SK-N-SH (cell line): ENCODE measurements at regions of chr1 and their contacts with region 1.

Region 1: DNA sequence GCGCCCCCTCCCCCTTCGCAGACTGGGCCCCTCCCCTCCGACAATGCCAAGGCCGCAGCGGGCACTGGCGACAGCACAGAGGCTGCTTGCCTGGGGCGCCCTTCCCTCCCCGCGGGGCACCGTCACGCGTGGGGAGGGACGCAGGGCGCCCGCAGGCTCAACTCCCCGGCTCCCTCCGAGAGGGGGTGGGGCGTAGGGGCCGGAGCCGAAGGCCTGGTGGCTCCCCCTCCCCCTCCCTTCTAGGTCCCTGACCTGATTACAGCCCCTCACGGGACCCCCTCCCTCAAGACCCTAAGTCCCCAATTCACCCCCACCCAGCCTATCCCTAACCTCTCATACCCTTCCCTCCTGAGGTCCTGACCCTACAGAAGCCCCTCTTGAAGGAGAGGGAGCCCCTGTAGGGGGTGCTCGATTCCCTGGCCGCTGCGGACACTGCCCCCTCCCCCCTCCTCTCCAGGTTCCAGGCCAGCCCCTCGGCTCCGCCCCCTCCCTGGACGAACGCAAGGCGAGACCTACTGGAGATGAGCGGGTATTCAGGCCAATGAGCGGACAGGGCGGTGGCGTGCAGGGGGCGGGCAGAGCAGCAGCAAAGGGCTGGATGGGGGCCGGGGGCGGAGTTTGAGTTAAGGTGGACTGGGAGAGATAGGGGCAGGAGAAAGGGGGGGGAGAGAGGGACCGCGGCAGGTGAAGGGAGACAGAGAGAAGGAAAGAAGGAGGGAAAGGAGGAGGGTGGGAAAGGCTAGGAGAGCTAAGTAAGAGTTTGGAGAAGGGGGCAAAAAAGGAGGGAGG is 733 bp upstream of the ZBTB7B start:
- DNase-seq: peak; percentile 96
- H3K4me3 ChIP-seq: peak overlapping the region; percentile 57 to 71
- H3K27ac ChIP-seq: peak overlapping the region; percentile 92 to 96
- H3K4me1 ChIP-seq: peaks cover 19 to 33% of the 10 kb centered on the region in 2 experiments
- H3K27me3 ChIP-seq: no peaks in the 10 kb centered on the region
- CTCF ChIP-seq: peak; percentile 69
- EP300 ChIP-seq: no peak
- RAD21 ChIP-seq: no peak

Region 2: DNA sequence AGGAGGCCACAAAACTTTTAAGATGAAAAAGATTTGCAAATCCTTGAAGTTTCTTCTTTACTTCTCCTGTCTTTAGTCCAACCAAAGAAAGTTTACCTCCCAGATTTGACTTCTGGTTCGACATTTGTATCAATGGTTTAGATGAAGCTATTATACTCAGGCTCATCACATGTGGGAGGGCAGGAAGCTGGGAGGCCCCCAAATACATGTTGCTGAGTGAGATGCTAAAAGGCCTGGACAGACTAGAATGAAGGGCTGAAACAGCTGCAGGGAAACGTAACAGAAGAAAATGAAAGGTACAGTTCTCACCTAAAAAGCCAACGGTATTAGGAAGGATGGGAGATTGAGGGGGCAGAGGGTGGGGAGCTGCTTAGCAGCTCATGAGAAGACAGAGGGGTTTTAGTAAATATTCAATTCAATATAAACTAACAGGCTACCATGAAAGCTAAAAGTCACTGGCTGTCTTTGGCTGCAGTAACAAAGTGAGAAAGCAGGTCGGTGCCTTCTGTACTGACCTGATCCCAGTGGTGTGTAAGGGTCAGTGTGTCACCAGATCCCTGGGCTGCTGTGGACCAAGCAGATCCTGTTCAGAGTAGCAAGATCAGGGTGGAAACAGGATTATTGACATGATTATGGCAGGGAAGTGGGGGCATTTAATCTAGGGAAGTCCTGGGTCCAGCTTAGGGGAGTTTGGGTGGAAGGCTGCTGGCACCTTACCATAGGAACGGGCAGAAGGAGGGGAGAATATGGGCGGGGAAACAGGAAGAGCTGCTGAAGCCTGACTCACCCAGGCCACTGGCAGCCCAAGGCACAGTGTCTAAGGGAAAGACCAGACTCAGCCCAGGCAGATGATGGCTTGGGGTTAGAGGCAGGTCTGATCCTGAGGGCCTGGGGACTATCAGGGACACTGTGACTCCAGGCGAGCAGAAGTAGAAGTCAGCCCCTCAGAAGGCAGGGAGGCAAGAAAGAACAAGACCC is 192.1 kb before region 1 on chr1:
- CTCF ChIA-PET with region 1: no interaction called
- POLR2A ChIA-PET with region 1: no interaction called
- DNase-seq: no peak
- H3K4me3 ChIP-seq: no peak overlapping the region
- H3K27ac ChIP-seq: no peak overlapping the region
- H3K4me1 ChIP-seq: peaks cover 0 to 46% of the 10 kb centered on the region in 2 experiments; a peak in 2 of 4 replicates
- H3K27me3 ChIP-seq: peaks cover 24% of the 10 kb centered on the region
- CTCF ChIP-seq: no peak
- EP300 ChIP-seq: no peak
- RAD21 ChIP-seq: no peak

Region 3: DNA sequence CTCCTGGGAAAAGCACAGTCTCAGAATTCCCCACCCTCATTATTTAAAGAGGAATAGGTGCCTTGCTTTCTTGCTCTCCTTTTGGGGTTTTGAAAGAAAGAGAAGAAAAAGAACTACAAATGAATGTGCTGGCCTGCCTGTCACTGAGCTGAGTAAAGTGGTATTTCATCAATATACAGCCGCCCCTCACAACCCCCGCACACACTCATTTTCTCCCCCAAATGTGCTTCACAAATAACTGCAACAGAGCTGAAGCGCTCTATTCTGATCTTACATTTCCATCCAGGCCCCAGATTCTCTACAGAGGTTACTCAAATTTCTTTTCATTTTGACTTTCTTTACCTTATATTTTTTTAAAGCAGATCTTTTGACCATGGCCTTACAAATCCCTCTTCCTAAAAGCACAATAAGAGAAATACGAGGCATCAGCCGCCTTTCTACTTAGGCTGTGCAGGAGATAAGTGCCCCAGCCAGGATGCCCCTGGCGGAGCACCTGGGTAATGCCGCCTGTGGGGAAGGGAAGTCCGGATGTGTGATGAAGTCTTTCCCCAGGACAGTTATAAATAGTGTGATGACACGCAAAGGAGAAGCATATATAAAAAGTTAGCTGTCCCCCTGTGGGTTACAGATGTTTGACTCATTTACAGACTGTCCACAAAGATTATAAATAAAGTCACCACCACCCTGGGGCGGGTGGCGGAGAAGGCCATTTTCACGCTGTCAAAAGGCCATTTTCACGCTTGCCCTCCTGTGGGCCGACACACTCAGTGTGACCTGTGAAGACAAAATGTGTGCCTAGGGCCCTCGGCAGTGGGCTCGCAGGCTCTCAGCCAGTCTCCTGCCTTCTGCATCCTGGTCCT is 138.3 kb before region 1 on chr1:
- CTCF ChIA-PET with region 1: no interaction called
- POLR2A ChIA-PET with region 1: no interaction called
- DNase-seq: peak; percentile 53
- H3K4me3 ChIP-seq: no peak overlapping the region; a peak in 1 of 4 replicates
- H3K27ac ChIP-seq: no peak overlapping the region
- H3K4me1 ChIP-seq: peaks cover 5 to 31% of the 10 kb centered on the region in 2 experiments; a peak in 2 of 4 replicates
- H3K27me3 ChIP-seq: peaks cover 8% of the 10 kb centered on the region; the same call in 1 of the 2 replicates
- CTCF ChIP-seq: peak; percentile 53
- EP300 ChIP-seq: no peak
- RAD21 ChIP-seq: 0 out of 2 replicates have a peak, but pooled peaks have one; percentile 5

Region 4: GRCh38 chr1:154943649-154944400 is 58.0 kb before region 1 on chr1:
- CTCF ChIA-PET with region 1: interaction called, 20 read pairs
- POLR2A ChIA-PET with region 1: no interaction called
- DNase-seq: peak; percentile 83
- H3K4me3 ChIP-seq: no peak overlapping the region
- H3K27ac ChIP-seq: no peak overlapping the region
- H3K4me1 ChIP-seq: peaks cover 4 to 25% of the 10 kb centered on the region in 2 experiments; a peak in 2 of 4 replicates
- H3K27me3 ChIP-seq: no peaks in the 10 kb centered on the region
- CTCF ChIP-seq: peak; percentile 82
- EP300 ChIP-seq: no peak
- RAD21 ChIP-seq: peak; percentile 80

Region 5: DNA sequence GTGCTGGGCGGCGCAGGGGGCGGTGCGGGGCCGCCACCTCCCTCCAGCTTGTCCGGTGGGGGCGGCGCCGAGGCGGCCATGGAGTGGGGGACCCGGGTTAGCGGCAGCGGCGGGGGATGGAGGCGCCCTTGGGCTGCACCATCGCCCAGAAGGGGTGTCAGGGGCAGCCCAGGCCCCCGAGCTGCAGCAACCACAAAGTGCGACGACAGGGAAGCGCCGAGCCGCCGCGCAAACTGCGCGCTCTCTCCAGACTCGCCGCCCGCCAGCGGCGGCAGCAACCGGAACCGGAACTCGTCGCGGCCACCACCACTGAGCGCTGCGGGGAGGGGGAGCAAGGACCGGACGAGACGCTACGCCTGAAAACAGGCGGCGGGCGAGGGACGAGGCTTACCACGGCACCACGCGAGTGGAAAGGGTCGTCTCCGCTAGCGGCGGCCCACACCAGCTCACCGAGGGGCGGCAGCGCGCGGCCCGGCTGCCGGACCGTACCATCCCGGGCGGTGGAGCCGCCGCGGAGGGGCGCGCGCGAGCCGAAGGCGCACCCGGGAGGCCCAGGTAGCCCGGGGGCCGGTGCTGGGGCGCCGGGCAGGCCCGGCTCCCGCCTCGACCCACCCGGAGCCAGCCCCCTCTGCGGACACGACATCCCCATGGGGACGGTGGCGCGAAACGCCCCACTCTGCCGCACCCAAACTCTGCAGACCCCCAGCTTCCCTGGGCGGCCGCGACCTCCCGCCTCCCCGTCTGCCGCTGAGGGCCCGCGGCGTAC is 40.2 kb before region 1 on chr1 and contains the start of gene PYGO2:
- CTCF ChIA-PET with region 1: interaction called, 640 read pairs
- POLR2A ChIA-PET with region 1: interaction called, 18 read pairs
- DNase-seq: peak; percentile 93
- H3K4me3 ChIP-seq: peak within 1 kb of the TSS; percentile 72 to 73
- H3K27ac ChIP-seq: peak within 1 kb of the TSS; percentile 83 to 98
- H3K4me1 ChIP-seq: peaks cover 4 to 36% of the 10 kb centered on the region in 2 experiments; a peak in 3 of 4 replicates
- H3K27me3 ChIP-seq: no peaks in the 10 kb centered on the region
- CTCF ChIP-seq: peak; percentile 69
- EP300 ChIP-seq: 0 out of 4 replicates have a peak, but pooled peaks of 1 of the 2 experiments have one; percentile 26
- RAD21 ChIP-seq: peak; percentile 46
- polyA plus RNA-seq, gene PYGO2: 23.3 and 28.2 TPM in 2 replicates

Region 6: GRCh38 chr1:154974063-154974807 is 27.6 kb before region 1 on chr1 and contains the start of gene CKS1B:
- CTCF ChIA-PET with region 1: interaction called, 640 read pairs
- POLR2A ChIA-PET with region 1: interaction called, 15 read pairs
- DNase-seq: peak; percentile 81
- H3K4me3 ChIP-seq: peak within 1 kb of the TSS; percentile 67 to 79
- H3K27ac ChIP-seq: peak within 1 kb of the TSS; percentile 99 to 100
- H3K4me1 ChIP-seq: peaks cover 27 to 53% of the 10 kb centered on the region in 2 experiments
- H3K27me3 ChIP-seq: no peaks in the 10 kb centered on the region
- CTCF ChIP-seq: no peak
- EP300 ChIP-seq: no peak
- RAD21 ChIP-seq: no peak
- polyA plus RNA-seq, gene CKS1B: 256 and 308 TPM in 2 replicates

Region 7: DNA sequence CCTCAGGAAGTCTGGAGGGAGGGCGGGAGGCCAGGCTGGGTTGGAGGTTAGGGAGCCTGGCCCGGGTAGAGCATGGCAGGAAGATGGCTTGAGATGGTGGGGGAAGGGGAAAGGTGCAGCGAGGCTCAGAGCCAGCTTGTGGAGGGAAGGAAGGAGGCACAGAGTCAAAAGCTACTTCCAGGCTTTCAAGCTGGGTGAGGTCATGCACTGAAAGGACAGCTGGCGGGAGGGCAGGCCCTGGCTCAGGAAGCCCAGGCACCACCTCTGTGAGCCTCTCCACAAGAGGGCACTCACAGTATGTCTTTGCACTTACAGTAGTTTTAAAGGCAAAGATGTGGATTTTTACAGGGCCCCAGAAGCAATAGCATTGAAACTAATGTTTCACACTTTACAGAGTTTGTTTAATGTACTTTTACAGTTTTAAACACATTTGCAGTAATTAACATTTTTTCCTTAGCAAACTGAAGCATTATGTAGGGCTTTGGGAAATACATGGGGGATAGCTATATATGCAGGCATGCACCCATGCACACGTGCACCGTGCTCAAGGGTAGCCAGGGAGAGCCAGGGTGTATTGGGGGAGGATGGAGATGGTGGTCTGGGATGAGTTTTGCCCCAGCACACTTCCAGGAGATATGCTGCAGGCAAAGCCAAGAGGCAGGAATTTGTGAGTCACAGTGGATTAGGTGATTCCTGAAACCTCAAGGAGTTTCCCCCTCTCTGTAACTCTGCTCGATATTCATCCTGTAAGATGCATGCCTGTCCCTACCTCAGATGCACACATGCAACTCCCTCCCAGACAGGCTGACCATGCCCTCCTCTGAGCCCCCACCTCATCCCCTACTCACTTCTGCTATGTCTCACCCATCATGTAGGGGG is 43.2 kb after region 1 on chr1:
- CTCF ChIA-PET with region 1: interaction called, 18 read pairs
- POLR2A ChIA-PET with region 1: interaction called, 5 read pairs
- DNase-seq: peak; percentile 84
- H3K4me3 ChIP-seq: no peak overlapping the region
- H3K27ac ChIP-seq: no peak overlapping the region; a peak in 1 of 4 replicates
- H3K4me1 ChIP-seq: peaks cover 11 to 27% of the 10 kb centered on the region in 2 experiments; a peak in 3 of 4 replicates
- H3K27me3 ChIP-seq: no peaks in the 10 kb centered on the region
- CTCF ChIP-seq: peak; percentile 81
- EP300 ChIP-seq: no peak
- RAD21 ChIP-seq: peak; percentile 84

Region 8: DNA sequence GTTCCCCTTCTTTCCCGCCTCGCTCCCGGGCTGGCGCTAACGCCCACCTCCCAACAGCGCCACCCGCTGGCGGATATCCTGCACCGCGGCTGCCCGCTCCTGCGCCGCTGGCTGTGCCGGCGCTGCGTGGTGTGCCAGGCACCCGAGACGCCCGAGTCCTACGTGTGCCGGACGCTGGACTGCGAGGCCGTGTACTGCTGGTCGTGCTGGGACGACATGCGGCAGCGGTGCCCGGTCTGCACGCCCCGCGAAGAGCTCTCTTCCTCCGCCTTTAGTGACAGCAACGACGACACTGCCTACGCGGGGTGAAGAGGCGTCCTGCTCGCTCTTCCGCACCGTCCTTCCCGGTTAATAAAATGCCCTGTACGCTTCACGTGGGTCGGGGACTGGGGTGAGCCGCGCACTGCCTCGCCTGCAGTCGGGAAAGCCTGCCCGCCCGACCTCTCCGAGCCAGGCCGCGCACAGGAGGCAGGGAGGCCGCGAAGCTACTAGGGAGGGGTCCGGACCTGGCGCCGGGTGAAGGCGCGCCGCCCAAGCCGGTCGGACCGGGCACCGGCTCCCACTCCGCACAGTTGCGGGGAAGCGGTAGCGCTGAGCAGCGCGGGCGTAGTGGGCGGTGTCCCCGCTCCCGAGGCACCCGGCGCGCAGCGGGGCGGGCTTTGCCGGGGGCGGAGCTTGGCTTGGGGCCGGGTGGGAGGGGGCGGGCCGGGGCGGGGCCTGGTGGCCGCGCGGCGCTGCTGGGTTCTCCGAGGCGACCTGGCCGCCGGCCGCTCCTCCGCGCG is 48.9 kb after region 1 on chr1 and contains the start of gene ADAM15:
- CTCF ChIA-PET with region 1: interaction called, 18 read pairs
- POLR2A ChIA-PET with region 1: no interaction called
- DNase-seq: peak; percentile 99
- H3K4me3 ChIP-seq: peak within 1 kb of the TSS; percentile 84 to 98
- H3K27ac ChIP-seq: peak within 1 kb of the TSS; percentile 61 to 92
- H3K4me1 ChIP-seq: peaks cover 7 to 42% of the 10 kb centered on the region in 2 experiments
- H3K27me3 ChIP-seq: no peaks in the 10 kb centered on the region
- CTCF ChIP-seq: peak; percentile 88
- EP300 ChIP-seq: no peak
- RAD21 ChIP-seq: peak; percentile 40
- polyA plus RNA-seq, gene ADAM15: 60.1 and 64.1 TPM in 2 replicates

Region 9: DNA sequence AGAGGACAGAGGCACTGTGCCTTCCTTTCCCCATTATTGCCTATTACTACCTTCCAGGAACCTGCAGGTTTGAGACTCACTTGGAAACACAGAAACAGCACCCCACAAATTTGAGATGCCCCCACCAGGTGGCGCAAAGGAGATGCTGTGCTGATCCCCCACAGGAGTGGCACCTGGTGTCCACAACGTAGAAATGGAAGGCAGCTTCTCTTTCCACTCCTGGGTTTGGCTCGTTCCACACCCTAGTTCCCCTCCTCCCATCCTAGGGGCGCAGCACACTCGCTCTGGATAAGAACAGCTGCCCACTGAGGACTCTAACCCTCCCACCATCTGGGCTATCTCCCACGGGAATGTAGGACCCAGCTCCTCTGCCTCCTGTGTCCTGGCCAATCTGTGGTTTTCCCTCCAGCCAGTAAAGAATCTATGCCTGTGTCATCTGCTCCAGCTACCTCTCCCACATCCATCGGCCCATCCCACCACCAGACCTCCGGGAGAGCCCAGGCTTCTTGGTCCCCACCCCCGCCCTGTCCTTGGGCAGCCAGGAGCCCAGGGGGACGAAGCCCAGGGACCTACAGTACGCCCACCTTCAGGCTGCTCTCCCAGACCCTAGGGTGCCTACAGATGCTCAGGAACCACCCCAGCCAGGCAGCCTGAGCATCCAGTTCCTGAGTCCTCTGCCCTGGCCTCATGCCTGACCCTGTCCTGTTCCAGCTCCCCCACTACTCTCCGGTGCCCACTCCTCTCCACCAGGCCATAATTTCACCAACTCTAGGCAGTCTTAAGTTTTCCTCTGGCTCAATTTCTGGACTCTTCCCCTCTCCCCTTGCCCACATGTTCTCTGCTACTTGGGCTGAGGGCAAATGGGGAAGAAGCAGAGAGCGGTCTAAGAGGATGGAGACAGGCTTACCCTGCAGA is 205.3 kb after region 1 on chr1:
- CTCF ChIA-PET with region 1: no interaction called
- POLR2A ChIA-PET with region 1: no interaction called
- DNase-seq: peak; percentile 83
- H3K4me3 ChIP-seq: peak overlapping the region; percentile 65 to 98
- H3K27ac ChIP-seq: peak overlapping the region; percentile 93 to 98
- H3K4me1 ChIP-seq: peaks cover 0 to 29% of the 10 kb centered on the region in 2 experiments; a peak in 3 of 4 replicates
- H3K27me3 ChIP-seq: no peaks in the 10 kb centered on the region
- CTCF ChIP-seq: peak; percentile 88
- EP300 ChIP-seq: no peak
- RAD21 ChIP-seq: peak; percentile 72